ENCODE measurements at regions of chr17 and their contacts with region 1.

Region 1: GRCh38 chr17:49227436-49228261 is 2.9 kb downstream of the PHOSPHO1 start:
- H3K4me3 ChIP-seq: no peak overlapping the region
- H3K27ac ChIP-seq: no peak overlapping the region
- H3K4me1 ChIP-seq: no peaks in the 10 kb centered on the region; the same call in none of the 2 replicates
- CTCF ChIP-seq: peak; percentile 77

Region 2: DNA sequence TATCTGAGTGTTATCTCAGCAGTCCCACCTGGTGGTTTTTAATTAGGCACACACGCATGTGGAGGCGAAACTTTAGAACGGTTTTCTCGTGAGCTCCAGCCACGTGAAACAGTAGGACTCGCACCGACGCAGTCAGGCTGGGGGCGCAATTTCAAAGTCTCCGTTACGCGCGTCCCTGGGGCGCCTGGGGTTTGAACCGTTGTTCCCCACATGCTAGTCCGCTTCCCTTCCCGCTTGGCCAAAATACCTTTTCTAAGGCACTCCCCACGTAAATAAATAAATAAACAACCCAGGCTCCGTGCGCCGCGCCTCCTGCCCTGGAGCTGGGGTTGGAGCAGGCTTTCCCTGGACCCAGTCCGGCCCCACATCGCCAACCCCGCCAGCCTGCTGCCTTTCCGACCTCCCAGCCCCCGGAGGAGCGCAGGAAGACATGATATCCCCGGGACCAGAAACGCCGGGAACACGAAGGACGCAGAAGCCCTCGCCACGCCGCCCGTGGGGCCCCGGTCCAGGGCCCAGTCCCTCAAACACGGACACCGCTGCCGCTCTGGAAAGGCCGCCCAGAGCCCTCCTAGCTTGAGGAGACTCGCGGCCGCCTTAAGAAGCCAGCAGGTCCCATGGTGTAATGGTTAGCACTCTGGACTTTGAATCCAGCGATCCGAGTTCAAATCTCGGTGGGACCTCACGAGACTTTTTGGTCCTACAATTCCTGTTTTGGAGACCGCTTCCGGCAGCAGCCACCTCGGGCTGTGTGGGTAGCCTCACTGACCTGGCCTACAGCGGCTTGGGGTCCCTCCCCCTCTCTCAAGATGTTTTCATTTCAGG is 35.5 kb before region 1 on chr17:
- CTCF ChIA-PET with region 1: interaction called, 15 read pairs
- POLR2A ChIA-PET with region 1: interaction called, 8 read pairs
- H3K4me3 ChIP-seq: peak overlapping the region; percentile 81
- H3K27ac ChIP-seq: peak overlapping the region; percentile 97
- H3K4me1 ChIP-seq: peaks cover 2% of the 10 kb centered on the region; the same call in 1 of the 2 replicates
- CTCF ChIP-seq: peak; percentile 92

Region 3: DNA sequence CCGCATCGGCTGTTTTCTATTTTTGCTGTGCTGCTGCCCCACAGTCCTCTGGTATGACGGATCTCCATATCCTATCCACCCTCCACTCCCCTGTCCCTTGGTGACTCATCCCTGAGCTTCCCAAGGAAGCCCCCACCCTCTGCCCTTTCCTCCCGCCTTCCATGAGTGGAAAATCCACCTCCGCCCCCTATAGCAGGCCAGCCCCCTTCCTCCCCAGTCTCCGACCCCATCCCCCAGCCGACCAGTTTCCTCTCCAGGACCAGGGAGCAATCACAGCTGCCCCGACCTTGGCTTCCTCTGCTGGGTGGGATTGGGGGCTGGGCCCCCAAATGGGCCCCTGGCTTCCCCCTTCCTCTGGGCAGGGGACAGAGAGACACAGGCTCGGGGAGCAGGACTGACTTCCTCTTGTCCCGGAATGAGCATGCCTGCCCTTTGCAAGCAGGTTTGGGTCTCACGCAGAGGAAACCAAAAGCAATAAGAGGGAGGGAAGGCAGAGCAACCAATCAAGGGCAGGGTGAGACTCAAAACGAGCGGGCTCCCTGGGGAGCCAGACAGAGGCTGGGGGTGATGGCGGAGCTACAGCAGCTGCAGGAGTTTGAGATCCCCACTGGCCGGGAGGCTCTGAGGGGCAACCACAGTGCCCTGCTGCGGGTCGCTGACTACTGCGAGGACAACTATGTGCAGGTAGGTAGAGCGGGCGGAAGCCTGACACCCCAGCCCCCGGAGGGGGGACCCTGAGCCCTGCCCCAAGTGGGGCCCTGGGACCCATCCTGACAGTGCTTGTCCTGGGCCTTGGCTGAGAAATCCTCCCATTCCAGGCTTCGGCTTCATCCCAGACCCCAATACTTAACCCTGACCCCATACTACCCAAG is 17.3 kb before region 1 on chr17 and contains the starts of genes ABI3 and GNGT2:
- CTCF ChIA-PET with region 1: interaction called, 63 read pairs
- POLR2A ChIA-PET with region 1: no interaction called
- H3K4me3 ChIP-seq: no peak within 1 kb of the TSS
- H3K27ac ChIP-seq: no peak within 1 kb of the TSS
- H3K4me1 ChIP-seq: no peaks in the 10 kb centered on the region
- CTCF ChIP-seq: no peak

Region 4: GRCh38 chr17:49239963-49240362 is 12.3 kb after region 1 on chr17:
- CTCF ChIA-PET with region 1: interaction called, 33 read pairs
- POLR2A ChIA-PET with region 1: interaction called, 9 read pairs
- H3K4me3 ChIP-seq: no peak overlapping the region
- H3K27ac ChIP-seq: no peak overlapping the region
- H3K4me1 ChIP-seq: no peaks in the 10 kb centered on the region
- CTCF ChIP-seq: no peak

Region 5: GRCh38 chr17:49305926-49306325 is 78.3 kb after region 1 on chr17:
- CTCF ChIA-PET with region 1: no interaction called
- POLR2A ChIA-PET with region 1: no interaction called
- H3K4me3 ChIP-seq: no peak overlapping the region
- H3K27ac ChIP-seq: no peak overlapping the region
- H3K4me1 ChIP-seq: no peaks in the 10 kb centered on the region
- CTCF ChIP-seq: no peak

Measured in HEK293 (cell line).